ENCODE measurements at regions of chr9 and their contacts with region 1.

Region 1: DNA sequence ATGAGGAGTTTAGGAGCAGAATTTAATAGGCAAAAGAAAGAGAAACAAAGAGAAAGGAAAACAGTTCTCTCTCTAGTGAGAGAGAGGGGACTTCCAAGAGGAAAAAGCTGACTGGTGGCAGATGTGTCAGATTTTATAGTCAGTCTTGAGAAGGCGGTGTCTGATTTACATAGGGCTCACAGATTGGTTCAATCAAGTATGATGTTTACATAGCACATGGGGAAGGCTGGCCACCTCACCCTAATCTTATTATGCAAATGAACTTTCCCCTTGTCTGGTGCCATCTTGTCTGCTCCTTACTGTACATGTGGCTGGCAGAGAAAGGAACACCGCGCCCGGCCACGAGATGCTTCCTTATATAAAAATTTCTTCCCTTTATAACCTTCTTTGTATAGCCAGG is 24.7 kb downstream of the UNC13B start:
- DNase-seq: no peak
- ATAC-seq: no peak
- H3K4me3 ChIP-seq: no peak overlapping the region
- H3K27ac ChIP-seq: no peak overlapping the region
- H3K4me1 ChIP-seq: no peaks in the 10 kb centered on the region
- H3K27me3 ChIP-seq: no peaks in the 10 kb centered on the region
- CTCF ChIP-seq: no peak

Region 2: GRCh38 chr9:35102926-35103659 is 83.4 kb before region 1 on chr9 and contains the start of gene STOML2:
- CTCF ChIA-PET with region 1: no interaction called
- POLR2A ChIA-PET with region 1: interaction called, 11 read pairs
- in situ Hi-C with region 1: no loop called
- intact Hi-C with region 1: no loop called
- DNase-seq: peak; percentile 78
- ATAC-seq: peak; percentile 98
- H3K4me3 ChIP-seq: peak within 1 kb of the TSS; percentile 80 to 97
- H3K27ac ChIP-seq: peak within 1 kb of the TSS; percentile 96
- H3K4me1 ChIP-seq: peaks cover 18% of the 10 kb centered on the region
- H3K27me3 ChIP-seq: no peaks in the 10 kb centered on the region
- CTCF ChIP-seq: no peak
- total RNA-seq, gene STOML2: 264 TPM

Region 3: GRCh38 chr9:35226660-35227059 is 40.1 kb after region 1 on chr9:
- CTCF ChIA-PET with region 1: no interaction called
- POLR2A ChIA-PET with region 1: no interaction called
- in situ Hi-C with region 1: no loop called
- intact Hi-C with region 1: no loop called
- DNase-seq: no peak
- ATAC-seq: no peak
- H3K4me3 ChIP-seq: no peak overlapping the region
- H3K27ac ChIP-seq: no peak overlapping the region
- H3K4me1 ChIP-seq: no peaks in the 10 kb centered on the region
- H3K27me3 ChIP-seq: no peaks in the 10 kb centered on the region
- CTCF ChIP-seq: no peak